Ovary (tissue), 10 donors: ENCODE measurements at regions of chr10 and their contacts with region 1.

Region 1: DNA sequence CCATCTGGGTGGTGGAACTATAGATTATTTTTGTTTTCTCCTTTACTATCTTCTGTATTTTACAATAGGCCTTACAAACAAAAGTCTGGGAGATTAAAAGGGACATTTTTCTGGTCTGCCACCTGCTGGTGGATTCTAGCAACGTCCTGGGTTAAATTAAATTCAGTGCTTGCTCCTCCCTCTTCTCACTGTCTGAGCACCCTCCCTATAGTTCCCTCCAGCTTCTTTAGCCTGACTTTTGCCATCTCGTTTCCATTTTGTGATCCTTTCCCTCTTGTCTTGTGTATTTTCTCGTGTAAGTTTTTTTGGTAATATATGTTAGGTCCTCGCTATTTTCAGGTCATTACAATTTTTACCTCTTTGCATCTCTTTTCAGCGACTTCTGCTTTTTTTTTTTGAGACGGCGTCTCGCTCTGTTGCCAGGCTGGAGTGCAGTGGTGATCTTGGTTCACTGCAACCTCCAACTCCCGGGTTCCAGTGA is 16.1 kb downstream of the ANKRD16 start:
- DNase-seq: peak; percentile 47 to 79 (median 68)
- H3K4me3 ChIP-seq: no peak overlapping the region
- H3K27ac ChIP-seq: no peak overlapping the region
- H3K4me1 ChIP-seq: no peaks in the 10 kb centered on the region
- H3K27me3 ChIP-seq: no peaks in the 10 kb centered on the region
- CTCF ChIP-seq: peak; percentile 63 to 83 (median 73)
- EP300 ChIP-seq: no peak
- POLR2A ChIP-seq: no peak

Region 2: DNA sequence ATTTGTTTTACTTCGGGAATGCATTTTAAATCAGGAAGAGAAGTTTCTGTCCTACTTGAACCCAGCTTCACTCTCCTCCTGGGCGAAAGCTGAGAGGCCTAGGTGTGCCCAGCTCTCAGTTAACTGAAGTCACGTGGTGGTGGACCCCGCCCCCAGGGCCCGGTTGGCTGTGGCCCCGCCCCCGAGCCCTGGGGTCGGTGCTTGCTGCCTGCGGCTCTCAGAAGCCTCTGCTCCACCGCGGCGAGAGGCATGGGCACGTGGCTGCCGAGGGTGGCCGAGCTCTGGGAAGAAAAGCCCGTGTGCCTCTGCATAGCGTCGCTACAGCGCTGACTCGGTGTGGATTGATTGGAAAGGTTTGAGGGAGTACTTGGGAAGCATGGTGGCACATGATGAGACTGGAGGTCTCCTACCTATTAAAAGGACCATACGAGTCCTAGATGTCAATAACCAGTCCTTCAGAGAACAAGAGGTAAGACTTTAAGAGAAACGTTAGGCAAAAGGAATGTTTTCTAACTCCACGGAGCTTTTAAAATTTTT is 427.1 kb before region 1 on chr10:
- intact Hi-C with region 1: loop called in 3 of 4 experiments (anchors 5 to 10 kb)
- DNase-seq: peak; percentile 95 to 98 (median 96)
- H3K4me3 ChIP-seq: peak overlapping the region; percentile 49
- H3K27ac ChIP-seq: peak overlapping the region in 1 of 2 donors; percentile 51
- H3K4me1 ChIP-seq: peaks cover 3% of the 10 kb centered on the region
- H3K27me3 ChIP-seq: no peaks in the 10 kb centered on the region
- CTCF ChIP-seq: no peak
- EP300 ChIP-seq: no peak
- POLR2A ChIP-seq: peak; percentile 86

Region 3: GRCh38 chr10:5629303-5630111 is 244.0 kb before region 1 on chr10:
- intact Hi-C with region 1: loop called in 1 of 4 experiments (anchors 10 kb)
- DNase-seq: peak; percentile 71 to 87 (median 83)
- H3K4me3 ChIP-seq: no peak overlapping the region
- H3K27ac ChIP-seq: peak overlapping the region in 1 of 2 donors; percentile 57
- H3K4me1 ChIP-seq: peaks cover 5% of the 10 kb centered on the region
- H3K27me3 ChIP-seq: no peaks in the 10 kb centered on the region
- CTCF ChIP-seq: peak; percentile 39 to 65 (median 57)
- EP300 ChIP-seq: no peak
- POLR2A ChIP-seq: no peak

Region 4: DNA sequence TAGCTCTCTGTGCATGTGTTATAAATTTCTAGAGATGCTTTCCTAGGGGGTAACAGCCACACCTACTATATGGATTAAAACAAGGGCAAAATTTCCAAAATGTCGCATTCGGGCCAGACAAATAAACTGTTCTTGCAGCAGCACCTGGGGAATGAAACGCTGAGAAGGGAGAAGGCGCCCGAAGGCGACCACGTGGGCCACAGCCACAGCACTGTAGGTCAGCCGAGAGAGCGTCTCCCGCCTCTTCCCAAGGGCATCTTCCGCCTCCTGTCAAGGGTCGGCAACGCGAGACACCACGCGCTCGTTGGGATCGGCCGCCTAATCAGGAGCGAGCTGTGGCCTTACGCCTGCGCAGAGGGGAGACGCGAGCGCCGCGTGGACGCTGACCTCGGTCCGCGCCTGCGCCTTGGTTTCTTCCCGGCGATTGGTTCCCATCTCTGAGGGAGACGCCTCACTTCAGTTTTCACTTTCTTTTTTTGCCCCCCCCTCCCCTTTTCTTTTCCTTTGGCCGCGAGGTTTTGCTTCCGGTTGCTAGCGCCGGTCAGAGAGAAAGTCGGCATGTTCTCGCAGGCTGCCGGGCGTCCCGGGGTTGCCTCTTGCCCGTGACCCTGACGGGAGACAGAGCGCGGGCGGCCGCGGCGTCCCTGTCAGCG is 189.1 kb before region 1 on chr10 and contains the start of gene TASOR2:
- intact Hi-C with region 1: loop called in 1 of 4 experiments (anchors 5 kb)
- DNase-seq: peak; percentile 97 to 99 (median 98)
- H3K4me3 ChIP-seq: peak within 1 kb of the TSS; percentile 96
- H3K27ac ChIP-seq: peak within 1 kb of the TSS; percentile 32 to 83
- H3K4me1 ChIP-seq: peaks cover 2% of the 10 kb centered on the region
- H3K27me3 ChIP-seq: no peaks in the 10 kb centered on the region
- CTCF ChIP-seq: no peak
- EP300 ChIP-seq: no peak
- POLR2A ChIP-seq: peak; percentile 20
- total RNA-seq, gene TASOR2: 60.8 to 91.2 (median 70.0) TPM

Region 5: DNA sequence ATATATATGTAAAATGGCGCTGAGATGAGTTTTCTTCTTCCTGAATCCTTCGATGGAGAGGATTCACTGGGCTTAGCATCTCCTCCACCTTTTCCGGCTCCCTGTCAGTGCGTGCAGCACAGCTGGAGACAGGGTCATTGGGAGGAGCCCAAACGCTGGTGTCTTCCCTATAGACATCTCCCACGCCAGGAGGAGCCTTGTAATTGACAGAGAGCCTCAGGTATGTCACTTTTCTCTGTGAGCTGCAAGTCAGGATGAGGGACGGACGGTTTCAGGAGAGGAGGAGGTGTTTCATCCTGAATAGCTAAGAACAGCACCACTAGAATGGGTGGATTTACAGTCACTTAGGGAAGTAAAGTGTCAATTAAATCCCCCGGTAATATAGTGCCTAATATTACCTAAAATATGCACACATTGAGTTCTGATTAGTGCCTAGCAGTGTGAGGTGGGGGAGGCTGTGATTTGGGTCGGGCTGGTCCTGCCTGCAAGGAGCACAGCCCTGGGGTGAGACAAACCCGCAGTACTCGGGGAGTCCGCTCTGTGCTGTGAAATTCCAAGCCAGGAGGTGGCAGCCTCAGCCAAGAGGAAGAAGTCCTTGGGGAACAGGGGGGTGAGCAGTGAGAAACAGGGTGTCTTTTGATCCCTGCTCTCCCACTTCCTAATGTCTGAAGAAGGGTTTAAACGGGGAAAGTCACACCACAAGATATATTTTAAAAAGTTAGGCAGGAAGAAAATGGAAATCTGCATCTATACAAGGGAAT is 75.6 kb after region 1 on chr10:
- intact Hi-C with region 1: no loop called
- DNase-seq: peak; percentile 63 to 75 (median 69)
- H3K4me3 ChIP-seq: no peak overlapping the region
- H3K27ac ChIP-seq: no peak overlapping the region
- H3K4me1 ChIP-seq: peaks cover 11% of the 10 kb centered on the region
- H3K27me3 ChIP-seq: no peaks in the 10 kb centered on the region
- CTCF ChIP-seq: peak in 2 of 3 donors; percentile 25 to 44
- EP300 ChIP-seq: no peak
- POLR2A ChIP-seq: no peak